Motor neuron (in vitro differentiated cells): ENCODE measurements at regions of chr3 and their contacts with region 1.

Region 1: GRCh38 chr3:114827495-114827894 is 319.6 kb downstream of the ZBTB20 start:
- ATAC-seq: peak in 4 of 8 experiments; percentile 57 to 88 (median 82)
- H3K4me3 ChIP-seq: no peak overlapping the region
- H3K27ac ChIP-seq: no peak overlapping the region
- H3K4me1 ChIP-seq: no peaks in the 10 kb centered on the region

Region 2: GRCh38 chr3:113531826-113532697 is 1295.4 kb before region 1 on chr3 and contains the start of gene SIDT1:
- in situ Hi-C with region 1: no loop called
- ATAC-seq: peak; percentile 42 to 75 (median 64)
- H3K4me3 ChIP-seq: peak within 1 kb of the TSS; percentile 30 to 44 (median 41)
- H3K27ac ChIP-seq: no peak within 1 kb of the TSS
- H3K4me1 ChIP-seq: peaks cover 0 to 5% of the 10 kb centered on the region in 2 donors
- total RNA-seq, gene SIDT1: 0.33 to 6.1 (median 0.66) TPM in 6 of 8 experiments, not detected in the others

Region 3: DNA sequence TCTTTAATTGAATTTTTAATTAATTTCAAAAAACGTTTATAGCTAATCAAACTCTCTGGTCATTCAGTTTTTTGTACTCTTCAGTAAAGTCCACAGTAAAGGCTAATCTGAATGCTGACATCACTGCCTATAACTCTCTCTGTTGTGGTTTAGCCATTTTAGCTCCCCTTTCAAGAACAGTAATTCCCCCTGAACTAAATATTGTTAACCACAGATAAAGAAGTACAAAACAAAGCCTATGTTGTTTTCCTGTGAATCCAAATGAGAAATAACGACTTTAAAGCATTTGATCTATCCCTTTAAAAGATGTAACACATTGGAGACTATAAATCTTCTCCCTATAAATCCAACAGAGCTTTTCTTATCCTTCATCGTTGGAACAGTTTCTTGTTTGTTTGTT is 225.4 kb after region 1 on chr3:
- in situ Hi-C with region 1: no loop called
- ATAC-seq: no peak
- H3K4me3 ChIP-seq: no peak overlapping the region
- H3K27ac ChIP-seq: no peak overlapping the region
- H3K4me1 ChIP-seq: no peaks in the 10 kb centered on the region

Region 4: GRCh38 chr3:115169808-115170207 is 342.3 kb after region 1 on chr3:
- in situ Hi-C with region 1: loop called in 2 of 9 experiments (anchors 25 kb)
- ATAC-seq: no peak
- H3K4me3 ChIP-seq: no peak overlapping the region
- H3K27ac ChIP-seq: no peak overlapping the region
- H3K4me1 ChIP-seq: no peaks in the 10 kb centered on the region